ENCODE measurements at regions of chr2 and their contacts with region 1.

Region 1: DNA sequence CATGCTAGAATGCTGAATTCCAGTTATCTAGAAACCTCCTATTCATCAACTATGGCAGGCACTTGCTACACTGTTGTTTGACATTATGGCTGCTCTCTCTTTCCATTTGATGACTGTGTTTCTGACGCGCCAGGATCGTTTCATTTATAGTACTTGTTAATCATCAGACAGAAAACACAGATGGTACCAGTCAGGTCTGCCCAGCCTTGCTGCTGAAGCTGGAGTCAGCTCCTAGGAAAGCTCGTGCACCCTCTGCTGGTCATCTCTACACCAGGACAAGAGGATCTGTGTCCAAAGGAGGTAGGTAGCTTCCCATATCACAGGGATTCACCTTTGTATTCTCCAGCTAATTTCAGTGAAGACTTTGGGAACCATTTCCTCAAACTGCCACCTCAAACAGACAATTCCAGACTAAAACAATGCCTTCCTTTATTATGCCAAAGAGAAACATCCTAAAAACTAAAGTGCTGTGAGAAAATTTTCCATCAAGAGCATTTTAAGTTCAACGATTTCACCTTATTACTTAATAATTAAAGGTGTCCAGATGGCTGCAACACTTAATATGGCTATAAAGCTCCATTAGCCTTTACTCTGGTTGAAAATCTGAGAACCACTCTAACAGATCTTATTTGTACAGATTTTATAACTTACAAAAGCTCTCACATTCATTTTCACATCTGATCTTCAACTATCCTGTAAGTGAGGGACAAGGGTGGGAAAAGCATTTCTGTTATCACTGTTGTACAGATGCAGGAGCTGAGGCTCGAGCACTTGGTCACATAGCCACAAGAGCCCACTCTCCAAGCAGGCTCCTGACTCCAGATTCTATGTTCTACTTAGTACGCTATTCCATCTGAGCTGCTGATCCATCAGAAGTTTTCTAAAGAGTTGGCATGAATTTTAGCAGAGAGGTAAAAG is 17.5 kb downstream of the METTL8 start:
- DNase-seq: peak; percentile 93
- ATAC-seq: peak; percentile 98
- H3K4me3 Mint-ChIP-seq: peak overlapping the region; percentile 24
- H3K27ac Mint-ChIP-seq: peak overlapping the region; percentile 84
- H3K4me1 Mint-ChIP-seq: peaks cover 37% of the 10 kb centered on the region
- H3K27me3 Mint-ChIP-seq: no peaks in the 10 kb centered on the region

Region 2: GRCh38 chr2:171244970-171245782 is 171.1 kb before region 1 on chr2:
- CTCF ChIA-PET with region 1: interaction called, 3 read pairs
- POLR2A ChIA-PET with region 1: no interaction called
- intact Hi-C with region 1: loop called in 1 of 2 experiments (anchors 5 kb)
- DNase-seq: no peak
- ATAC-seq: no peak
- H3K4me3 Mint-ChIP-seq: no peak overlapping the region
- H3K27ac Mint-ChIP-seq: no peak overlapping the region
- H3K4me1 Mint-ChIP-seq: peaks cover 42% of the 10 kb centered on the region
- H3K27me3 Mint-ChIP-seq: no peaks in the 10 kb centered on the region

Region 3: GRCh38 chr2:171260471-171261424 is 155.5 kb before region 1 on chr2:
- CTCF ChIA-PET with region 1: interaction called, 9 read pairs
- POLR2A ChIA-PET with region 1: no interaction called
- intact Hi-C with region 1: loop called (anchors 1 to 2 kb)
- DNase-seq: peak; percentile 50
- ATAC-seq: peak; percentile 90
- H3K4me3 Mint-ChIP-seq: peak overlapping the region; percentile 34
- H3K27ac Mint-ChIP-seq: peak overlapping the region; percentile 64
- H3K4me1 Mint-ChIP-seq: peaks cover 34% of the 10 kb centered on the region
- H3K27me3 Mint-ChIP-seq: no peaks in the 10 kb centered on the region

Region 4: DNA sequence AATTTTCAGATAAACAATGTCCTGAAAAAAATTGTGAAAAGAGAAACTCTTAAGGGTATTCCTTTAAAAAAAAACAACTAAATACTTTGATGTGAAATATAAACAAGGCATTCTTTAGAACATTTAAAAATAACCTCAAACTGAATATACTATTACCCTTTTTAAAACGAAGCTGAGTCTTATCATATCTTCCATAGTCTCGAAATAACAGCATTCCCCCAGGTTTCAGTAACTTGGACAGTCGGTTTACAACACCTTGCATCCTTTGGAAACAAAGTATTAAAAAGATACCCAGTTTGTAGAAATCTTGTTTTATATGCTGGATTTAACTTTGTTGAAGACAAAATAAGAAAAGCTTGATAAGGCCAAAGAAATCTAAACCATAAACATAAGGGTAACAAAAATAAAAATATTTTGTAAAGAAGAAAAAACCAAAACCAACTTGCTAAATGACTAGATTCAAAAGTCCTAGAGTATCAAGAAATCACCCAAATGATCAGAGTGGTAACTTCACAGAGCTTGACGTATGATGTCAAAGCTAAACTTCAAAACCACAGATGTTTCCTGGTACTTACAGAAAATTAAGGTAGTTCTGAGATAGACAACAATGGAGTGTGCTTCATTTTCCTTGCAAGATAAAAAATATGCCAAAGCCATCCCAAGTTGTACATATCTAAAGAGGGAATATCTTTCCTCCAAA is 90.2 kb before region 1 on chr2:
- CTCF ChIA-PET with region 1: interaction called, 20 read pairs
- POLR2A ChIA-PET with region 1: interaction called, 4 read pairs
- intact Hi-C with region 1: no loop called
- DNase-seq: no peak
- ATAC-seq: peak; percentile 89
- H3K4me3 Mint-ChIP-seq: peak overlapping the region; percentile 35
- H3K27ac Mint-ChIP-seq: peak overlapping the region; percentile 93
- H3K4me1 Mint-ChIP-seq: peaks cover 54% of the 10 kb centered on the region
- H3K27me3 Mint-ChIP-seq: no peaks in the 10 kb centered on the region

Region 5: GRCh38 chr2:171347591-171348032 is 68.7 kb before region 1 on chr2:
- CTCF ChIA-PET with region 1: interaction called, 6 read pairs
- POLR2A ChIA-PET with region 1: interaction called, 3 read pairs
- intact Hi-C with region 1: loop called in 1 of 2 experiments (anchors 1 kb)
- DNase-seq: peak; percentile 55
- ATAC-seq: peak; percentile 85
- H3K4me3 Mint-ChIP-seq: no peak overlapping the region
- H3K27ac Mint-ChIP-seq: peak overlapping the region; percentile 82
- H3K4me1 Mint-ChIP-seq: peaks cover 34% of the 10 kb centered on the region
- H3K27me3 Mint-ChIP-seq: no peaks in the 10 kb centered on the region